CD4-positive, alpha-beta memory T cell (primary cell): ENCODE measurements at regions of chr6 and their contacts with region 1.

Region 1: DNA sequence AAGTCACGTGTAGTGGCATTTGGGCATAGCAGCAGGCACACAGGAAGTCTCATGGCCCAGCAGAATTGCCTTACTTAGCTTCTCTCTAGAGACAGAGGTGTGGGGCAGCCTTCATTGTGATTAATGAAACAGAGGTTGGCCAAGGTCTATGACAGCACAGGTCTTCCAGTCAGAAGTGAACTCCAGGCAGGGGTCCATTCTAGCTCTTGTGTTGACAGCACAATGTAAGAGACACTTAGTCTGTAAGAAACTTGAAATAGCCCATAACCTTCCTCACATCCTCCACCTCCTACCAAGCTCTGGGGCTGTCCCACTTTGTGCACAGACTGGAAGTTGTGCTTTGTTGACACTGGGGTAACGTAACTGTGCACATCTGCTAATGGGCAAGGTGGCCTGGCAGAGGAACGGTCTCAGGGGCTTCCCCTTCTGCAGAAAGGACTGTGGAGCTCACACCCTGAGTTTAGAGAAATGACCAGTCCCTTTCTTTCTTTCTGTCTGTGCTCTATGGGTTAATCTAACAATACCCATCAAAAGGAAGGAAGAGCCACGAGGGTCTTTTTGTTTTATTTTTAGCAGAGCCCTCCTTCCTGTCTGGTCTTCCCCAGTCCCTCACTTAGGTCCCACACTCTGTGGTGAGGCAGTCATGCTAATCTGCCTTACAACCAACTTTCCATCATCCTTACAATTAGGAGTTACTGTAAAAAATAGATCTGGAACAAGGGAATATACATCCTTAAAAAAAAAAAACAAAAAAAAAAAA is 35.6 kb upstream of the TAGAP start:
- DNase-seq: no peak
- H3K4me3 ChIP-seq: no peak overlapping the region
- H3K4me3 Mint-ChIP-seq: peak overlapping the region in 1 of 8 donors; percentile 33
- H3K27ac ChIP-seq: no peak overlapping the region
- H3K27ac Mint-ChIP-seq: peak overlapping the region in 4 of 7 donors; percentile 4 to 62 (median 24)
- H3K4me1 ChIP-seq: peaks cover 22% of the 10 kb centered on the region
- H3K4me1 Mint-ChIP-seq: peaks cover 18 to 43% (median 29%) of the 10 kb centered on the region in 4 donors
- H3K27me3 ChIP-seq: no peaks in the 10 kb centered on the region
- H3K27me3 Mint-ChIP-seq: no peaks in the 10 kb centered on the region

Region 2: GRCh38 chr6:159092631-159093030 is 12.2 kb after region 1 on chr6:
- CTCF ChIA-PET with region 1: interaction called, 4 read pairs
- POLR2A ChIA-PET with region 1: interaction called, 8 read pairs
- intact Hi-C with region 1: loop called (anchors 2 kb)
- DNase-seq: no peak
- H3K4me3 ChIP-seq: no peak overlapping the region
- H3K4me3 Mint-ChIP-seq: no peak overlapping the region
- H3K27ac ChIP-seq: no peak overlapping the region
- H3K27ac Mint-ChIP-seq: peak overlapping the region in 1 of 7 donors; percentile 37
- H3K4me1 ChIP-seq: peaks cover 29% of the 10 kb centered on the region
- H3K4me1 Mint-ChIP-seq: peaks cover 18 to 38% (median 28%) of the 10 kb centered on the region in 4 donors
- H3K27me3 ChIP-seq: no peaks in the 10 kb centered on the region
- H3K27me3 Mint-ChIP-seq: no peaks in the 10 kb centered on the region